Spleen (tissue), 13 donors: ENCODE measurements at regions of chr6 and their contacts with region 1.

Region 1: DNA sequence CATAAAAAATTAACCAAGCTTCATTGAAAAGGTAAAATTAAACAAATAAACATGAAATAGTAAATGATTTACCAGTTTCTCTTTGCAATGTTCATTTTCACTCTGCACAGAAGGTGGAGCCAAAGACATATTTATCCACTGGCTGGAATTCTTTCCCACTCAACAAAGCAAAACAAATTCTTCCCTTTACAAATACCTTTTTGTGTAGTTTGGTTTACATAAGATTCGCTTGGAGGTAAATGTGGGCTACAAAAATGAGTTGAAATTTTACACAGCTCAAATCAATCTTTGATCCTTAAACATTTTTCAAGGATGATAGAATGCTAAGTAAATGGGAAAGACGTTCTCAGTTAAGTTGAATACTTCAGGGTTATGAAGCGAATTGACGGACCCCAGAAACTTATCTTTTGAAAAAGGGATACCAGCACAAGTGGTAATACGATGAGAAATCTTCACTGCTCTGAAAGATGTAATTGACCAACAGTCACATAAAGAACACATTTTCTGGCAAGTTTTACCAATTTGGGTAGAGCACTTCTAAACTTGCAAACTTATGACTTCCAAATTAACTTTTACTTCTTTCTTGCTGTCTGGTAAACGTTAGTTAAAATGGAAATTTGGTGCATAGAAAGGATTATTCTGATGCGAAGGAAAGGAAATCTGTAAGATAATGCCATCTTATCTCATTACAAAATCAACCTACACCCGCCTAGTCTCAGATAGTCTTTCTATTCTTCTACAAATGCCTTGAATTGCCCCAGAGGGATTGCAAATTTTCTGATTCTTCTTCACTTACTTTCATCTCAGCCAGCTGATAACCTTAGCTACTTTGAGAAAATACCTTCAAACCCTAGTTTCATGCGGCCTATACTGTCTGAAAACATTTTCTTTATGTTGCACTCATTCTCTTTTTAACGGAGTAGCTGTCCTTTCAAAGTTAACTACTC is 4.7 kb upstream of the GJA1 start:
- DNase-seq: no peak
- H3K4me3 ChIP-seq: no peak overlapping the region
- H3K27ac ChIP-seq: no peak overlapping the region
- H3K4me1 ChIP-seq: peaks cover 0 to under 1% (median 0%) of the 10 kb centered on the region in 6 donors
- H3K27me3 ChIP-seq: peaks cover 0 to 13% (median 0%) of the 10 kb centered on the region in 7 donors
- CTCF ChIP-seq: peak in 8 of 11 experiments; percentile 11 to 53 (median 36)
- POLR2A ChIP-seq: no peak

Region 2: GRCh38 chr6:121849477-121849876 is 418.7 kb after region 1 on chr6:
- intact Hi-C with region 1: loop called (anchors 2 kb)
- DNase-seq: no peak
- H3K4me3 ChIP-seq: no peak overlapping the region
- H3K27ac ChIP-seq: no peak overlapping the region
- H3K4me1 ChIP-seq: no peaks in the 10 kb centered on the region
- H3K27me3 ChIP-seq: no peaks in the 10 kb centered on the region
- CTCF ChIP-seq: peak in 8 of 11 experiments; percentile 34 to 60 (median 52)
- POLR2A ChIP-seq: no peak

Region 3: GRCh38 chr6:122033539-122034181 is 602.9 kb after region 1 on chr6:
- intact Hi-C with region 1: loop called (anchors 5 kb)
- DNase-seq: no peak
- H3K4me3 ChIP-seq: no peak overlapping the region
- H3K27ac ChIP-seq: no peak overlapping the region
- H3K4me1 ChIP-seq: no peaks in the 10 kb centered on the region
- H3K27me3 ChIP-seq: no peaks in the 10 kb centered on the region
- CTCF ChIP-seq: peak in 8 of 11 experiments; percentile 26 to 59 (median 51)
- POLR2A ChIP-seq: no peak